ENCODE measurements at regions of chr9 and their contacts with region 1.

Region 1: GRCh38 chr9:92716557-92716956 is 46.6 kb upstream of the IPPK start:
- DNase-seq: peak; percentile 90
- H3K4me3 ChIP-seq: no peak overlapping the region
- H3K27ac ChIP-seq: no peak overlapping the region
- H3K4me1 ChIP-seq: no peaks in the 10 kb centered on the region; a peak in 1 of 4 replicates
- H3K27me3 ChIP-seq: no peaks in the 10 kb centered on the region
- CTCF ChIP-seq: peak; percentile 92
- EP300 ChIP-seq: no peak
- RAD21 ChIP-seq: peak; percentile 85

Region 2: GRCh38 chr9:92180669-92181181 is 535.8 kb before region 1 on chr9:
- CTCF ChIA-PET with region 1: no interaction called
- POLR2A ChIA-PET with region 1: no interaction called
- DNase-seq: no peak
- H3K4me3 ChIP-seq: no peak overlapping the region
- H3K27ac ChIP-seq: no peak overlapping the region
- H3K4me1 ChIP-seq: no peaks in the 10 kb centered on the region; a peak in 1 of 4 replicates
- H3K27me3 ChIP-seq: no peaks in the 10 kb centered on the region
- CTCF ChIP-seq: no peak
- EP300 ChIP-seq: no peak
- RAD21 ChIP-seq: no peak

Region 3: GRCh38 chr9:92558612-92559374 is 157.8 kb before region 1 on chr9:
- CTCF ChIA-PET with region 1: no interaction called
- POLR2A ChIA-PET with region 1: no interaction called
- DNase-seq: no peak
- H3K4me3 ChIP-seq: no peak overlapping the region
- H3K27ac ChIP-seq: no peak overlapping the region
- H3K4me1 ChIP-seq: peaks cover 0 to 13% of the 10 kb centered on the region in 2 experiments; a peak in 2 of 4 replicates
- H3K27me3 ChIP-seq: no peaks in the 10 kb centered on the region
- CTCF ChIP-seq: no peak
- EP300 ChIP-seq: no peak
- RAD21 ChIP-seq: no peak

Region 4: GRCh38 chr9:92669890-92670708 is 46.5 kb before region 1 on chr9 and contains the start of gene IPPK:
- CTCF ChIA-PET with region 1: interaction called, 13 read pairs
- POLR2A ChIA-PET with region 1: no interaction called
- DNase-seq: peak; percentile 99
- H3K4me3 ChIP-seq: peak within 1 kb of the TSS; percentile 88 to 94
- H3K27ac ChIP-seq: peak within 1 kb of the TSS; percentile 93 to 98
- H3K4me1 ChIP-seq: peaks cover 0 to 27% of the 10 kb centered on the region in 2 experiments; a peak in 2 of 4 replicates
- H3K27me3 ChIP-seq: no peaks in the 10 kb centered on the region
- CTCF ChIP-seq: no peak
- EP300 ChIP-seq: peak in 1 of 2 experiments; percentile 45; a peak in 1 of 4 replicates
- RAD21 ChIP-seq: no peak
- polyA plus RNA-seq, gene IPPK: 16.5 and 20.2 TPM in 2 replicates

Region 5: GRCh38 chr9:92704528-92704927 is 12.0 kb before region 1 on chr9:
- CTCF ChIA-PET with region 1: interaction called, 14 read pairs
- POLR2A ChIA-PET with region 1: no interaction called
- DNase-seq: no peak
- H3K4me3 ChIP-seq: no peak overlapping the region
- H3K27ac ChIP-seq: no peak overlapping the region
- H3K4me1 ChIP-seq: no peaks in the 10 kb centered on the region
- H3K27me3 ChIP-seq: no peaks in the 10 kb centered on the region
- CTCF ChIP-seq: no peak
- EP300 ChIP-seq: no peak
- RAD21 ChIP-seq: no peak

Region 6: GRCh38 chr9:92747459-92748232 is 31.1 kb after region 1 on chr9:
- CTCF ChIA-PET with region 1: interaction called, 15 read pairs
- POLR2A ChIA-PET with region 1: no interaction called
- DNase-seq: no peak
- H3K4me3 ChIP-seq: no peak overlapping the region
- H3K27ac ChIP-seq: no peak overlapping the region; a peak in 1 of 4 replicates
- H3K4me1 ChIP-seq: peaks cover 0 to 43% of the 10 kb centered on the region in 2 experiments; a peak in 2 of 4 replicates
- H3K27me3 ChIP-seq: no peaks in the 10 kb centered on the region
- CTCF ChIP-seq: no peak
- EP300 ChIP-seq: no peak
- RAD21 ChIP-seq: no peak

Region 7: DNA sequence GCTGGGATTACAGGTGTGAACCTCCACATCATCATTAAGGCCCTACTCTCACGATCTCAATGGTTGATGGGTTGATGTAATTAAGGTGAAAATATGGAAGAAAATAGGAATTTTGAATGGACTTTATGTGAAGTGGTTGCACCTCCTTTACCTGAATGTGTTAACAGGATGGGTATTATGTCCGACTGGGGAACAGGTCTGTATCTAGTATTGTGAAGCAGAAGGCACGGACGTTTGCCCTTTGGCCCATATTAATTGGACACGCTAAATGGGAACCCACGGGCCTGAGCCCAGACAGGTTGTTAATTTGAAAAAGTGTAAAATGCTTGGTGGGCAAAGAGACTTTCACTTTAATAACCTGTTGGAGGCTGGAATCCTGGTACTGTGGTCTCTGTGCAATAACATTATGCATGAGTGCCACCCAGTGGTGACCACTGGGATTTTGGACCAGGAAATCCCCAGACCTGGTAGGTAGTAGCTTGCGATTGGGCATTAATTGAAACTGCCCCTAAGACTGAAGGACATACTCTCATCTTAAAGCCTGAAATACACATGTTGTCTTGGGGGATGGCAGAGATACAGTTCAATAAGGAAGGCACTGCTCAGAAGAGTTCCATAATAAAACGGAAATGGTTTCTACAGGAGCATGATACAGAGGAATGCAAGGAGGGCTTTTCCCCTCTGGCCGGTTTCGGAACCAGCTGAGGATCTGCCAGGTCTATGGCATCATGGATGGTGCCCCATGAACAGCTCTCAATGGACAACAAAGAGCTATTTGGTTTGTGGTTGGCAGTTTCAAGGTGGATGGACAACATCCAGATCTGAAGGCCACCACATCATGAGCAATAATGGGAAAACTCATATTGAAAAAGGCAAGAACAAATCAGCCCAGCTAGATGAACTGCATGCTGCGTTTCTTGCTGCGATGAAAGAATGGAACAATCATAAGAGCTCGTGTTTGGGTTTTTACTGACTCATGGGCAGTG is 74.3 kb after region 1 on chr9:
- CTCF ChIA-PET with region 1: interaction called, 177 read pairs
- POLR2A ChIA-PET with region 1: no interaction called
- DNase-seq: peak; percentile 82
- H3K4me3 ChIP-seq: peak overlapping the region; percentile 2 to 27; a peak in 2 of 4 replicates
- H3K27ac ChIP-seq: no peak overlapping the region
- H3K4me1 ChIP-seq: no peaks in the 10 kb centered on the region; a peak in 1 of 4 replicates
- H3K27me3 ChIP-seq: peaks cover 11% of the 10 kb centered on the region
- CTCF ChIP-seq: peak; percentile 86
- EP300 ChIP-seq: no peak
- RAD21 ChIP-seq: peak; percentile 97